Activated CD4-positive, alpha-beta T cell treated with anti-CD3 and anti-CD28 coated beads, Interleukin-2, amount 10 ng/mL, durations not matched to agents 7 days and 5 days (primary cell): ENCODE measurements at regions of chr14 and their contacts with region 1.

Region 1: DNA sequence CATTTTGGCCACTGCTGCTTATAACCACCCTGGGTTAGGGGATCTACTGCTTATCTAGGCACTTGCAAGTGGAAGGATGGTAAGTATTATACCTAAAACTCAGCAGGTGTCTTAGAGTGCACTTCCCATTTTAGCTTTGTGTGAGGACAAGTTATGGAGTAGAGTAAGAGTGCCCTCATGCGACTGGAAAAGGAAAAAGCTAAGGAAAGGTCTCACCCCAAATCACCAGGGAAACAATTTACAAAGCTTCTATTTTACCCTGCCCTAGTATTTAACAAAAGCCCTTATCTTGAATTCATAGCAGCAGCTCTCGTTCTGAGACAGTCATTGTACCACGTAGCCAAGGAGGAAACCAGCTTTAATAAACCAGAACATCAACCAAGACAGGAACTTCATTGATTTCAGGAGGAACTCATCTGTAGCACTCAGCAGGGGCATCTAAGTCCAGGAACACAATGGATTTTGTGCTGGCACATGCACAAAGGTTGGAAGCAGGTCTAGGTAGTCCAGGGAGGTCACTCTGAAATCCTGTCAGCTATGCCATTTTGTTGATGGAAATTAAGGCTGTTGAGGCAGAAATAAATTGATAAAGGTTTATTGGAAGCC is 2.9 kb downstream of the RDH12 start:
- DNase-seq: peak; percentile 52
- H3K4me3 Mint-ChIP-seq: no peak overlapping the region
- H3K27ac Mint-ChIP-seq: no peak overlapping the region
- H3K4me1 Mint-ChIP-seq: peaks cover 2% of the 10 kb centered on the region
- H3K27me3 Mint-ChIP-seq: peaks cover 5% of the 10 kb centered on the region

Region 2: DNA sequence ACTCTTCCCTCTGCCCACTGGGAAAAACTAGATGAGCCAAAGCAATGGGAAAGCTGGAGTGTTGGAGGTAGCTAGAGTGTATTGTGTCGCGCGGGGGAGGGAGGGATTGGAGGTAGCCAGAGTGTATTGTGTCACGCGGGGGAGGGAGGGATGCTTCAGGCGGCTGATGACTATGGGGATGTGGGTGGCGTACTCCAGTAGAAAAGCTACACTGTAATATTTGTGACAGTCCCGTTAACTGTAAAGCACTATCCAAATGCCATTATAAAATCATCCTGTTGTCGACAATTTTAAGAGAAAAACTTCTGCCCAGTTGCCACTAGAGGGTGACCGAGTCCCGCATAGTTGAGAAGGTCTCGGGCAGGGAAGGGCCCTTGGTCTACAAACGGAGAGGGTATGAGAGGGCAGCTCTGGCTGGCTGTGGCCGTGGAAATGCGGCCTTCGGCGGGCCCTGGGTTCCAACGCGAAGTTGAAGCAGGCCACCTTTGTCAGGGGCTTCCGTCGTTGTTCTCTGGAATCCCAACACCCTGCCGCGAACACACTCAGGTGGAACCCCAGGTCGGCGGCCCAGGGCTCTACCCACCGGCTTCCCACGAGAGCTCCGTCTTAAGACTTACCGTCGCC is 277.5 kb before region 1 on chr14:
- CTCF ChIA-PET with region 1: interaction called, 17 read pairs
- POLR2A ChIA-PET with region 1: no interaction called
- DNase-seq: peak; percentile 84
- H3K4me3 Mint-ChIP-seq: no peak overlapping the region
- H3K27ac Mint-ChIP-seq: no peak overlapping the region
- H3K4me1 Mint-ChIP-seq: peaks cover 6% of the 10 kb centered on the region
- H3K27me3 Mint-ChIP-seq: peaks cover 26% of the 10 kb centered on the region

Region 3: DNA sequence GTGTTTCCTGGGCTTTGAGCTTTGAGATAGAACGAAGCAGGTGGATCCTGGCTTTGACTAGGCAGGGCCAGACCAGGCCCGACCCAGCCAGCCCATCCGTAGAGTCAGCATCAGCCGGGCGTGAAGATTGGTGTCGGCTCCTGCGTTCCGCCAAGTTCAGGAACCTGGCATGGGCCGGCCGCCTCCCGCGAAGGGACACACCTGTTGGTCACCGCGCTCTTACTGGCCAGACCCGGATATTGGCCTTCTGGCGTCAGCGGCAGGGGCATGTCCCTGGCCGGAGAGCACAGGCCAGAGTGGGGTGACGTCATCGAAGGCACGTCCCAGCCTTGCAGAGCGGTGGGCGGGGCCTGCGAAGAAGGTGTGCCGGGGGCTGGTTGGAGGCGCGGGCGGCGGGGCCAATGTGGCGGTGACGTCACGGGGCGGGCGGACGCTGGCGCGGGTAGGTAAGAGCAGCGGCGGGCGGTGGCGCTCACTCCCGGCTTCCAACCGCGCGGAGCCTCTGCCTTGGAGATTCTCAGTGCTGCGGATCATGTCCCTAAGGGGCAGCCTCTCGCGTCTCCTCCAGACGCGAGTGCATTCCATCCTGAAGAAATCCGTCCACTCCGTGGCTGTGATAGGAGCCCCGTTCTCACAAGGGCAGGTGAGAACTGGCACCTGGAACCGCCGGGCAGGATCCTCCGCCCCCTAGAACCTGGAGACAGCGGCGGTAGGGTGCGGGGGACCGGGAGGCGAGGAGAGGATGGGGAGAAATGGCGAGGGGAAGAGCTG is 85.0 kb before region 1 on chr14 and contains the start of gene ARG2:
- CTCF ChIA-PET with region 1: interaction called, 26 read pairs
- POLR2A ChIA-PET with region 1: no interaction called
- DNase-seq: peak; percentile 96
- H3K4me3 Mint-ChIP-seq: peak within 1 kb of the TSS; percentile 75
- H3K27ac Mint-ChIP-seq: peak within 1 kb of the TSS; percentile 84
- H3K4me1 Mint-ChIP-seq: peaks cover 33% of the 10 kb centered on the region
- H3K27me3 Mint-ChIP-seq: peaks cover 14% of the 10 kb centered on the region
- total RNA-seq, gene ARG2: 1.0 to 1.6 TPM